Naive thymus-derived CD8-positive, alpha-beta T cell (primary cell): ENCODE measurements at regions of chr11 and their contacts with region 1.

Region 1: GRCh38 chr11:85627998-85628770 is at the start of gene TMEM126B:
- DNase-seq: peak; percentile 88 to 96 (median 94)
- ATAC-seq: peak; percentile 96 to 97
- H3K4me3 Mint-ChIP-seq: peak within 1 kb of the TSS; percentile 89 to 100 (median 96)
- H3K27ac Mint-ChIP-seq: peak within 1 kb of the TSS; percentile 91 to 99 (median 96)
- H3K4me1 Mint-ChIP-seq: peaks cover 26 to 51% (median 49%) of the 10 kb centered on the region in 4 donors
- H3K27me3 Mint-ChIP-seq: peaks cover 0 to 2% (median 0%) of the 10 kb centered on the region in 5 donors
- polyA plus RNA-seq, gene TMEM126B: 51.1 to 64.3 (median 56.6) TPM

Region 2: DNA sequence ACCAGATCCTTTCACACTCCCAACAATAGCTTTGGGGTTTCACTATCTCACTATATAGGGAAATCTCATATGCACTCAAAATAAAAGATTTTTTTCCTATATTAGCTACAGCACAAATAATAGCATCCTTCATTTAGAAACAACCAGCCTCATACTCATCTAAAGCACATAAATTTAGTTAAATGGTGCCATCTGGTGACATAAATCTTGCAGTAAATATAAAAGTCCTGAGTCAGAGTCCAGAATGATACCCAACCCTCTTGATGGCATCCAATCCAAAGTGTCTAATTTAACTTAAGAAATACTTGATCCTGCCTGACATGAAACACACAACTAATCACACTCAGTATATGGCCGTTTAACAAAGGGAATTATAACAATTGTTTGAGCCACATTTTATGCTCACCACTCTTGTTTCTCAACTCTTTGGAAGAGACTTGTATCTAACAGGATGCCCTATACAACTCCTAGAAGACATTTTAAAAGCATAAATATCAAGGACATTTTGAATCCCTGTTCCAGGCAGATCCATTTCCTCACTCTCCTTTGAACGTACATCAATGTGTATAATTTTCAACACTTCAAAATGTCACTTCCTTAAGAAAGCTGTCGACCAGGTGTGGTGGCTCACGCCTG is 37.2 kb before region 1 on chr11:
- POLR2A ChIA-PET with region 1: no interaction called
- DNase-seq: no peak
- ATAC-seq: no peak
- H3K4me3 Mint-ChIP-seq: no peak overlapping the region
- H3K27ac Mint-ChIP-seq: no peak overlapping the region
- H3K4me1 Mint-ChIP-seq: no peaks in the 10 kb centered on the region
- H3K27me3 Mint-ChIP-seq: peaks cover 0 to 15% (median 2%) of the 10 kb centered on the region in 5 donors

Region 3: GRCh38 chr11:85664615-85665481 is 36.7 kb after region 1 on chr11 and contains the start of gene CREBZF:
- POLR2A ChIA-PET with region 1: interaction called, 43 read pairs
- DNase-seq: peak; percentile 80 to 95 (median 91)
- ATAC-seq: peak; percentile 68 to 70
- H3K4me3 Mint-ChIP-seq: peak within 1 kb of the TSS; percentile 97 to 100 (median 100)
- H3K27ac Mint-ChIP-seq: peak within 1 kb of the TSS; percentile 99 to 100 (median 100)
- H3K4me1 Mint-ChIP-seq: peaks cover 20 to 50% (median 44%) of the 10 kb centered on the region in 4 donors
- H3K27me3 Mint-ChIP-seq: no peaks in the 10 kb centered on the region
- polyA plus RNA-seq, gene CREBZF: 9.5 to 11.6 (median 11.1) TPM

Region 4: DNA sequence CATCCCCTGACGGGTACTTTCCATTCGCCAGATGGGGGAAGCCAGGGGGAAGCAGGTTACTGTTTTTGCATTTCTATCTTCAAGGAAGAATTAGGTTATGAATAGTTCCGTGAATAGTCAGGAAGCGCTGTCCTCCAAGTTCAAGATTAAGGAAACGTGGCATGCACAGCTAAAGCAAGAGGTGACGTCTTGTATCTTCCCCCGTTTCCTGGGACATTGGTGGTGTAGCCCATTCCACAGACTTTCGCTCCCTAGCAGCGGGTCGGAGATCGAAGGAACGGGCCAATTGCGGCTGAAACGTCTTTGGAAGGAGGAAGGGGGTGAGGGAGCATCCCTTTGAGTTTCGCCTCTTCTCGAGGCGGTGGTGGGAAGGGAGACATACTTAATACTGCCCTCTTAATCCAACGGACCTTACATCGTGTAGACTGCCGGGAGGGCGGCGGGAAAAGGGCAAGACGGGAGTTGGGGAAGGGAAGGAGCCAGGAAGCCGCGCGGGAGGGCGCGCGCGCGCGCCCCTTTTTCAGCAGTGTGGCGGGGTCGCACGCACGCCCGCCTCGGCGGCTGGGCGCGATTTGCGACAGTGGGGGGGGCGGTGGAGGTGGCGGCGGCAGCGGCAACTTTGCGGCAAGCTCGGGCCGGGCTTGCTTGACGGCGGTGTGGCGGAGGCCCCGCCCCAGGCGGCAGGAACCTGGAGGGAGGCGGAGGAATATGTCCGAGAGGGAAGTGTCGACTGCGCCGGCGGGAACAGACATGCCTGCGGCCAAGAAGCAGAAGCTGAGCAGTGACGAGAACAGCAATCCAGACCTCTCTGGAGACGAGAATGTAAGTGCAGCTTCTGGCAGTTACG is 616.6 kb after region 1 on chr11 and contains the start of gene EED:
- POLR2A ChIA-PET with region 1: interaction called, 11 read pairs
- DNase-seq: peak; percentile 90 to 95 (median 93)
- ATAC-seq: peak; percentile 83 to 84
- H3K4me3 Mint-ChIP-seq: peak within 1 kb of the TSS in 1 of 10 donors; percentile 2
- H3K27ac Mint-ChIP-seq: no peak within 1 kb of the TSS
- H3K4me1 Mint-ChIP-seq: peaks cover 15 to 29% (median 25%) of the 10 kb centered on the region in 4 donors
- H3K27me3 Mint-ChIP-seq: peaks cover 0 to 6% (median 0%) of the 10 kb centered on the region in 5 donors
- polyA plus RNA-seq, gene EED: 10.9 to 19.2 (median 12.1) TPM